ENCODE measurements at regions of chr21 and their contacts with region 1.

Region 1: GRCh38 chr21:29360799-29361765 is 62.4 kb downstream of the BACH1 start:
- DNase-seq: no peak
- H3K4me3 ChIP-seq: no peak overlapping the region
- H3K27ac ChIP-seq: no peak overlapping the region
- H3K4me1 ChIP-seq: no peaks in the 10 kb centered on the region
- H3K27me3 ChIP-seq: no peaks in the 10 kb centered on the region
- CTCF ChIP-seq: peak in 2 of 3 experiments; percentile 11 to 20; a peak in 3 of 4 replicates
- EP300 ChIP-seq: no peak
- POLR2A ChIP-seq: no peak
- RAD21 ChIP-seq: peak; percentile 49 to 59; a peak in 3 of 4 replicates

Region 2: GRCh38 chr21:29091032-29091431 is 270.1 kb before region 1 on chr21:
- CTCF ChIA-PET with region 1: interaction called, 12 read pairs
- POLR2A ChIA-PET with region 1: no interaction called
- DNase-seq: no peak
- H3K4me3 ChIP-seq: no peak overlapping the region
- H3K27ac ChIP-seq: no peak overlapping the region
- H3K4me1 ChIP-seq: peaks cover 0 to 4% (median 0%) of the 10 kb centered on the region in 4 experiments; a peak in 1 of 7 replicates
- H3K27me3 ChIP-seq: no peaks in the 10 kb centered on the region; a peak in 1 of 7 replicates
- CTCF ChIP-seq: no peak
- EP300 ChIP-seq: no peak
- POLR2A ChIP-seq: no peak
- RAD21 ChIP-seq: no peak